ENCODE measurements at regions of chr20 and their contacts with region 1.

Region 1: DNA sequence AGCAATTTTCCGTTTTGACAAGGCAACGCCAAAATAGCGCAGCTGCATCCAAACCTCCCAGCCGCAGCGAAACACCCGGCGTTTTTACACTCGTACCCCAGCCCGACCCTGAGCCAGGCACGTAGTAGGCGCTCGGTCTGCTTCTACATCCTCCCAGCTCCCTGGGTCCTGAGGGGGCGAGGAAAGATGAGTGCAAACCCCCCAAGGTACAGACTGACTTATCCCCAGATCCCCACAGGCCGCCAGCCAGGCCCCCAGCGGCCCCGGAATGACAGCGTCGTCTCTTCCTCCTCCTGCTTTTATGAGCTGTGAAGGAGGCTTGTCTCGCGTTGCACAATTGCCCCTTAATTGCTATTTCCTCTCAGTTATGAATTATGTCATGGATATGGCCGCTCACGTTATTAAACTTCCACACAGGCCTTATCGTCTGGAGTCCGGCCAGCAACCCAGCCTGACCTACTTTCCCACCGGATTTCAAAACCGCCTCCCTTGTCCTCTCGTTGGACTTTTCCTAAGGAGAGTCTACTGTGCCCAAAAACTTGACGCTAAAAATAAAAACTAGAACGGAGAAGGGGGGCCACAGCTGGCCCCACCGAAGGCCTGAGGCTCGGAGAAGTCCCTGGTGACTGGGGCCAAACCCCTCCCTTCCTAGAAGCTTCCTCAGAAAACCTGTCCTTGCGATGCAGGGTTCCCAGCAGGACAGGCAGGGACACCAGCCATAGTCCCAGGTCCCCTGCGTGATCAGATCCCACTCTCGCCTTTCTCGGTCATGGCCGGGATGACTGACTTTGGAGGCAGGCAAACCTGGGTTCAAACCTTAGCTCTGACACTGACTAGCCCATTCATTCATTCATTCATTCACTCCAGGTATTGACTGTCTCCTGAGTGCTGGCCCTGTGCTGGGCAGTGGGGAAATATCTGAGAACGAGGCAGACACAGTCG is 130.9 kb upstream of the PTPN1 start:
- DNase-seq: peak; percentile 94
- ATAC-seq: peak; percentile 92

Region 2: GRCh38 chr20:50245498-50246356 is 133.6 kb before region 1 on chr20:
- intact Hi-C with region 1: no loop called
- DNase-seq: peak; percentile 39
- ATAC-seq: no peak

Region 3: DNA sequence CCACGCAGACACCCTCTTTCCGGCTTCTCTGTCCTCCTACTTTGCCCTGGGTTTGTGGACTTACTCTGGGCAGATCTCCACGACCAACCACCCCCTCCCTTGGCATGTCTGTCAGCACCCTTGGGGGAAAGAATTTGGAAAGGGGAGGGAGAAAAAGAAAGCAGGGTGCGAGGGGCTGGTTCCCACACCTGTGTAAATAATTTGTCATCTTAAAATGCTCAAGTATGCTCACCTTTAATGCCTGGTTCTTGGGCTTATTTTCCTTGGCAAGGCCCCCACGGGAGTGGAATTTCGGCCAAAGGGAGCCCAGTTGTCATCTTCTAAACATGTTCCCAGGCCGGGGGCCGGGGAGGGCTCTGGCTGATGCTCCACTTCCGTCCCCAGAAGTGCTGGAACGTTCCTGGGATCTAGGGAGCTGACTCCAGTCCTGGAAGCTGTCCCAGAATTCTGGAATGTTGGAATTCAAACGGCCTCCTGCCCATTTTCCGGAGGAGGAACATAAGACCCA is 66.6 kb before region 1 on chr20:
- intact Hi-C with region 1: loop called (anchors 5 kb)
- DNase-seq: peak; percentile 81
- ATAC-seq: peak; percentile 32

Region 4: GRCh38 chr20:50346372-50347283 is 32.7 kb before region 1 on chr20:
- intact Hi-C with region 1: loop called (anchors 2 kb)
- DNase-seq: peak; percentile 92
- ATAC-seq: peak; percentile 81

Region 5: GRCh38 chr20:50460460-50461267 is 81.3 kb after region 1 on chr20:
- intact Hi-C with region 1: loop called (anchors 5 kb)
- DNase-seq: peak; percentile 94
- ATAC-seq: peak; percentile 93